Mucosa of descending colon (tissue), 3 donors: ENCODE measurements at regions of chr9 and their contacts with region 1.

Region 1: DNA sequence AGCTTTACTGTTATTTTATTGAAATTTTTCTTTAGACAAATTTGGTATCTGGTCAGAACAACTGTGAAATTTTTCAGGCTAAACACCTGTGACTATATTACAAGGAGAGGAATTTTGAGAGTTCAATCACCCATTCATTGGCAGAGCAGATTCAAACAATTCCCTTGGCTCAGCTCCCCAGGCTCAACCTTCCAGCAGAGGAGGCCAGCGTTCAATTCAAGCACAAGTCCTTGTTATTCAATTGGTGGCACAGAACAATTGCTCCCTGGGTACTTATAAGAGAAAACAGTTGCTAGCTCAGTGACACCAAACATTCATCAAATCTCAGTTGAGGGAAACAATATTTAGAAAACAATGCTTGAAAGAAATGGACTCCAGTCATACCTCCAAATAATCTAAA is 83.3 kb downstream of the SUSD1 start:
- DNase-seq: no peak
- ATAC-seq: no peak
- H3K4me3 ChIP-seq: no peak overlapping the region
- H3K4me1 ChIP-seq: peaks cover 5% of the 10 kb centered on the region
- CTCF ChIP-seq: no peak

Region 2: GRCh38 chr9:112333639-112334431 is 242.0 kb after region 1 on chr9:
- intact Hi-C with region 1: no loop called
- DNase-seq: peak; percentile 95 to 98 (median 96)
- ATAC-seq: peak; percentile 90
- H3K4me3 ChIP-seq: peak overlapping the region; percentile 99
- H3K4me1 ChIP-seq: peaks cover 20% of the 10 kb centered on the region
- CTCF ChIP-seq: peak; percentile 46

Region 3: GRCh38 chr9:112361601-112362000 is 269.8 kb after region 1 on chr9:
- intact Hi-C with region 1: loop called (anchors 5 to 10 kb)
- DNase-seq: peak in 1 of 3 donors; percentile 56
- ATAC-seq: peak; percentile 44
- H3K4me3 ChIP-seq: no peak overlapping the region
- H3K4me1 ChIP-seq: no peaks in the 10 kb centered on the region
- CTCF ChIP-seq: peak; percentile 11

Region 4: DNA sequence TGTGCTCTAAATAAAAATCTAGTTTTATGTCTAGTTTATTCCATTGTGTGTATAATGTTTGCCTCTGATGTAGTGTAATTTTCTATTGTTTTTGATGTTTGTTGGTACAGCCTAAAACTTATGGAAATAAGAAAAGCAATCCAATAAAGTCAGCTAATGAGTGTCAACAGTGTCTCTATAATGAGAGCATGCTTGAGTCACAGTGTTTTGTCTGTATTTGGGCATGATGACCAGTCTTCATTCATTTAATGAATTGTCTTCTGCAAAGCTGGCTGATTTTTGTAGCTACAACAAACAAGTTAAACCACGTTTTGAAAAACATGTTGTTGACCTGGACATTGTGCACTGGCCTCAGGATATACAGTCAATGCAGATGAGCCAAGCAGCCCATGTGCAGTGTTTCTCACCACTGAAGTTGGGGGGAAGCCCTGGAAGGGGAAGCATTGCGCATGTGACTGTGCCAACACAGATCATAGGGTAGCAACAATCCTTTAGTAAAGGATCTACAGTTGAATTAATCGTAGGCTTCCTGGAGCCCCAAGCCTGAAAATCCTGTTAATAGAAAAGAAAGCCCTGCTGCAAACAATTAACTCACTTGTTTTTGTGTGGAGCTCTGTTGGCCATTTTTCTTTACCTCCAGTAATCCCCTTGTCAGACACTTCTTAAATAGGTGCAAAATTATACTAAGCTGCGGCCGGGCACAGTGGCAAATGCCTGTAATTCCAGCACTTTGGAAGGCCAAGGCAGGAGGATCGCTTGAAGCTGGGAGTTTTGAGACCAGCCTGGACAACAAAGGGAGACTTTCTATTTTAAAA is 538.1 kb after region 1 on chr9:
- intact Hi-C with region 1: no loop called
- DNase-seq: no peak
- ATAC-seq: no peak
- H3K4me3 ChIP-seq: no peak overlapping the region
- H3K4me1 ChIP-seq: no peaks in the 10 kb centered on the region
- CTCF ChIP-seq: no peak